Naive thymus-derived CD4-positive, alpha-beta T cell (primary cell): ENCODE measurements at regions of chr12 and their contacts with region 1.

Region 1: GRCh38 chr12:94207849-94208621 is 59.7 kb downstream of the PLXNC1 start:
- DNase-seq: peak in 8 of 9 donors; percentile 24 to 55 (median 48)
- ATAC-seq: peak; percentile 86
- H3K4me3 ChIP-seq: peak overlapping the region; percentile 58
- H3K4me3 Mint-ChIP-seq: peak overlapping the region; percentile 70 to 87 (median 82)
- H3K27ac ChIP-seq: peak overlapping the region; percentile 61
- H3K27ac Mint-ChIP-seq: peak overlapping the region; percentile 90 to 98 (median 94)
- H3K4me1 ChIP-seq: peaks cover 40 to 49% of the 10 kb centered on the region in 2 donors
- H3K4me1 Mint-ChIP-seq: peaks cover 36 to 58% (median 56%) of the 10 kb centered on the region in 7 donors
- H3K27me3 ChIP-seq: no peaks in the 10 kb centered on the region
- H3K27me3 Mint-ChIP-seq: no peaks in the 10 kb centered on the region

Region 2: GRCh38 chr12:93467351-93468007 is 740.6 kb before region 1 on chr12 and contains the start of gene MRPL42:
- CTCF ChIA-PET with region 1: no interaction called
- POLR2A ChIA-PET with region 1: no interaction called
- intact Hi-C with region 1: loop called in 1 of 2 experiments (anchors 10 kb)
- DNase-seq: peak; percentile 86 to 96 (median 94)
- ATAC-seq: peak; percentile 97
- H3K4me3 ChIP-seq: peak within 1 kb of the TSS; percentile 94
- H3K4me3 Mint-ChIP-seq: peak within 1 kb of the TSS; percentile 85 to 96 (median 93)
- H3K27ac ChIP-seq: peak within 1 kb of the TSS; percentile 85
- H3K27ac Mint-ChIP-seq: peak within 1 kb of the TSS; percentile 90 to 98 (median 95)
- H3K4me1 ChIP-seq: peaks cover 8 to 10% of the 10 kb centered on the region in 2 donors
- H3K4me1 Mint-ChIP-seq: peaks cover 28 to 48% (median 36%) of the 10 kb centered on the region in 7 donors
- H3K27me3 ChIP-seq: no peaks in the 10 kb centered on the region
- H3K27me3 Mint-ChIP-seq: no peaks in the 10 kb centered on the region
- total RNA-seq, gene MRPL42: 30.1 to 65.8 (median 45.6) TPM

Region 3: GRCh38 chr12:94193168-94193567 is 14.9 kb before region 1 on chr12:
- CTCF ChIA-PET with region 1: interaction called, 3 read pairs
- POLR2A ChIA-PET with region 1: interaction called, 3 read pairs
- intact Hi-C with region 1: loop called in 1 of 2 experiments (anchors 2 kb)
- DNase-seq: no peak
- ATAC-seq: no peak
- H3K4me3 ChIP-seq: no peak overlapping the region
- H3K4me3 Mint-ChIP-seq: no peak overlapping the region
- H3K27ac ChIP-seq: no peak overlapping the region
- H3K27ac Mint-ChIP-seq: peak overlapping the region in 1 of 9 donors; percentile 72
- H3K4me1 ChIP-seq: no peaks in the 10 kb centered on the region
- H3K4me1 Mint-ChIP-seq: peaks cover 0 to 8% (median 0%) of the 10 kb centered on the region in 7 donors
- H3K27me3 ChIP-seq: no peaks in the 10 kb centered on the region
- H3K27me3 Mint-ChIP-seq: no peaks in the 10 kb centered on the region

Region 4: GRCh38 chr12:94262228-94263010 is 54.4 kb after region 1 on chr12:
- CTCF ChIA-PET with region 1: no interaction called
- POLR2A ChIA-PET with region 1: interaction called, 25 read pairs
- intact Hi-C with region 1: loop called (anchors 1 kb)
- DNase-seq: peak; percentile 50 to 81 (median 72)
- ATAC-seq: peak; percentile 89
- H3K4me3 ChIP-seq: peak overlapping the region; percentile 94
- H3K4me3 Mint-ChIP-seq: peak overlapping the region; percentile 80 to 99 (median 97)
- H3K27ac ChIP-seq: peak overlapping the region; percentile 91
- H3K27ac Mint-ChIP-seq: peak overlapping the region; percentile 91 to 100 (median 99)
- H3K4me1 ChIP-seq: peaks cover 15 to 18% of the 10 kb centered on the region in 2 donors
- H3K4me1 Mint-ChIP-seq: peaks cover 23 to 52% (median 46%) of the 10 kb centered on the region in 7 donors
- H3K27me3 ChIP-seq: no peaks in the 10 kb centered on the region
- H3K27me3 Mint-ChIP-seq: no peaks in the 10 kb centered on the region

Region 5: DNA sequence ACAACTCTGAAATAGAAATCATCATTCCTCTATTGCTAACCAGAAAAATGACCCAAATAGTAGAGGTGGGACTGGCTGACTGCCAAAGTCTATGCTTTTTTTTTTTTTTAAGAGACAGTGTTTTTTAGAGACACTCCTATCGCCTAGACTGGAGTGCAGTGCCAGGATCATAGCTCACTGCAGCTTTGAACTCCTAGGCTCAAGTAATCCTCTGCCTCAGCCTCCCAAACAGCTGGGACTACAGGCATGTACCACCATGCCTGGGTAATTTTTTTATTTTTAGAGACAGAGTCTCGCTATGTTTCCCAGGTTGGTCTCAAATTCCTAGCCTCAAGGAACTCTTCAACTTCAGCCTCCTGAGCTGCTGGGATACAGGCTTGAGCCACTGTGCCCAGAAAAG is 846.2 kb after region 1 on chr12:
- CTCF ChIA-PET with region 1: no interaction called
- POLR2A ChIA-PET with region 1: no interaction called
- intact Hi-C with region 1: no loop called
- DNase-seq: no peak
- ATAC-seq: no peak
- H3K4me3 ChIP-seq: no peak overlapping the region
- H3K4me3 Mint-ChIP-seq: no peak overlapping the region
- H3K27ac ChIP-seq: no peak overlapping the region
- H3K27ac Mint-ChIP-seq: no peak overlapping the region
- H3K4me1 ChIP-seq: no peaks in the 10 kb centered on the region
- H3K4me1 Mint-ChIP-seq: no peaks in the 10 kb centered on the region
- H3K27me3 ChIP-seq: no peaks in the 10 kb centered on the region
- H3K27me3 Mint-ChIP-seq: no peaks in the 10 kb centered on the region

Region 6: GRCh38 chr12:95548539-95549391 is 1340.7 kb after region 1 on chr12:
- CTCF ChIA-PET with region 1: no interaction called
- POLR2A ChIA-PET with region 1: no interaction called
- intact Hi-C with region 1: loop called in 1 of 2 experiments (anchors 5 kb)
- DNase-seq: peak; percentile 66 to 81 (median 77)
- ATAC-seq: peak; percentile 94
- H3K4me3 ChIP-seq: peak overlapping the region; percentile 75
- H3K4me3 Mint-ChIP-seq: peak overlapping the region; percentile 89 to 96 (median 94)
- H3K27ac ChIP-seq: peak overlapping the region; percentile 96
- H3K27ac Mint-ChIP-seq: peak overlapping the region; percentile 70 to 98 (median 94)
- H3K4me1 ChIP-seq: peaks cover 6 to 23% of the 10 kb centered on the region in 2 donors
- H3K4me1 Mint-ChIP-seq: peaks cover 36 to 73% (median 61%) of the 10 kb centered on the region in 7 donors
- H3K27me3 ChIP-seq: no peaks in the 10 kb centered on the region
- H3K27me3 Mint-ChIP-seq: peaks cover 0 to 22% (median 7%) of the 10 kb centered on the region in 5 donors